ENCODE measurements at regions of chr1 and their contacts with region 1.

Region 1: DNA sequence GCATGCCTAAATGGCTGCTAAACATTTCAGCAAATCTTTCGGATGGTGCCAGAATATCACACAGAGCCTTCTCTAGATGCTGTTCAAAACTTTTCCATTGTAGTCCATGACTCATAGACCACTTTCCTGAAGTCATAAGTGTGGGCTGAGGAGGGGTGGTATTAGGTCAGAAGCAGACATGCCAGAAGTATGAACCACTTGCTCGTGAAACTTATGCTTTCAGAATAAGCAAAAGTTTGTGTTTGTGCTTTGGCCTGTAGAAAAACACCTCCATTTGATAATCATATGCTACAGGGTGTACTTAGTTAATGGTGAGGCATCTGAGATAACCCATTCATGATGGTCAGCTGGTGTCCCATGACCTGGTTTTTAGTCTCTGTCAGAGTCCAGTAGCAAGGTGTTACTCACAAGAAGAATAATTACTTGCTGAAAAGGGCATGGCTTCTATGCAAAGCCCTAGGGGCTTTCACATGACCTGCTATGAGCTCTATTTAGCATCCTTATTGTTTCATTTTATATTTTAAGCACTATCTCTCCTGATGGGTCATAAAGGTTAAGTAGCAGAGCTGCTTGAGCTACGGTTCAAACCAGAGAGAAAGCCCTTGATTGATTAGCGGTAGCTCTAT is 183.1 kb upstream of the IVNS1ABP start:
- DNase-seq: peak; percentile 67
- H3K4me3 ChIP-seq: no peak overlapping the region
- H3K27ac ChIP-seq: no peak overlapping the region
- H3K4me1 ChIP-seq: peaks cover 8% of the 10 kb centered on the region
- H3K27me3 ChIP-seq: no peaks in the 10 kb centered on the region
- CTCF ChIP-seq: no peak
- POLR2A ChIP-seq: no peak

Region 2: DNA sequence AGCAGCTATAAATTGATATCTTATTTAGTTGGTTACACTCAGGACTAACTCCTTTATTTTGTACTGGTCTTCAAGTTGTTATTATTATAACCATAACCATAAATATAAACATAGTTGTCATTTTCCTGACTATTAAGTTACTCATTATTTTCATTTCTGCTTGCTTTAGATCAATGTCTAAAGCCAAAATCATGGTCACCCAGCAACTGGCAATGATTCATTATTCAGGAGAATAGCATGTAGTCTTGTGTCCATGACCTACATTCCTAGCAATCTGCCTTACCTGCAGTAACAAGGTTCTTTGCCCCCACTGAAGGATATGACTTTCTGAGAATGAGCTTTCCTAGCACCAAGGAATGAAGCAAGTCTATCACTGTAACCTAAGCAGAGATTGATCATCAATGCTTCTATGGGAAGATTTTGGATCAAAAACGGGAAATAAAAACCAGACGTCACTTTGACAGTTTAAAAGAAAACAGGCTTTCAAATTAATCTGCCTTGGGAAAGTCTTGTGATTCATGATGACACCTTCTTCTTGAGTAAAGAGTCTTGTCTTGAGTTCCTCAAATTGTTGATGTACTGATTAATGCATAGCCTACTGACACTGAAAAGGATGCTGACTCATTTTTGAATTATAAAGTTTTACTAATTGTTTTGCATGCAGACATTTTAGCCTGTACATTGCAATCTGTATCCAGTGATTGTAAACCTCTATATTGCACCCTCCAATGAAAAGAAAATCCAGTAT is 20.2 kb after region 1 on chr1:
- CTCF ChIA-PET with region 1: no interaction called
- POLR2A ChIA-PET with region 1: no interaction called
- dilution Hi-C with region 1: no loop called
- intact Hi-C with region 1: loop called (anchors 2 kb)
- DNase-seq: peak; percentile 57
- H3K4me3 ChIP-seq: no peak overlapping the region
- H3K27ac ChIP-seq: peak overlapping the region; percentile 35
- H3K4me1 ChIP-seq: peaks cover 8% of the 10 kb centered on the region
- H3K27me3 ChIP-seq: no peaks in the 10 kb centered on the region
- CTCF ChIP-seq: no peak
- POLR2A ChIP-seq: no peak

Region 3: DNA sequence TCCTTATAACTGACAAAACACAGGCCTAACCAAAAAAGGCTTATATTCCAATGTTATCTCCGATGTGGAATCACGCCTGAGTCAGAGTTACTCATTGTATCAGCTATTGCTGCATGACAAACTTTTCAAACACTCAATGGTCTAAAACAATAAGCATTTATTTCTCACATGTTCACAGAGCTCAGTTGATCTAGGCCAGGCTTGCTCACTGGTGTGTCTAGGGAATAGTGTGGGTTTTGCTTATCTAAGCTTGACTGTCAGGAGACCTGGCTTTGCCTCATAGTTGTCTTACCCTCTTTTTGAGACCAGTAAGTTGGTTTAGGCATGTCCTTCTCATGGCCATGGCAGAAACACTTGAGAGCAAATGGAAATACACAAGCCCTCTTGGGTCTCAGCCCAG is 364.8 kb after region 1 on chr1:
- CTCF ChIA-PET with region 1: no interaction called
- POLR2A ChIA-PET with region 1: no interaction called
- dilution Hi-C with region 1: no loop called
- intact Hi-C with region 1: no loop called
- DNase-seq: peak; percentile 74
- H3K4me3 ChIP-seq: no peak overlapping the region
- H3K27ac ChIP-seq: peak overlapping the region; percentile 63
- H3K4me1 ChIP-seq: peaks cover 36% of the 10 kb centered on the region
- H3K27me3 ChIP-seq: no peaks in the 10 kb centered on the region
- CTCF ChIP-seq: no peak
- POLR2A ChIP-seq: no peak

Region 4: DNA sequence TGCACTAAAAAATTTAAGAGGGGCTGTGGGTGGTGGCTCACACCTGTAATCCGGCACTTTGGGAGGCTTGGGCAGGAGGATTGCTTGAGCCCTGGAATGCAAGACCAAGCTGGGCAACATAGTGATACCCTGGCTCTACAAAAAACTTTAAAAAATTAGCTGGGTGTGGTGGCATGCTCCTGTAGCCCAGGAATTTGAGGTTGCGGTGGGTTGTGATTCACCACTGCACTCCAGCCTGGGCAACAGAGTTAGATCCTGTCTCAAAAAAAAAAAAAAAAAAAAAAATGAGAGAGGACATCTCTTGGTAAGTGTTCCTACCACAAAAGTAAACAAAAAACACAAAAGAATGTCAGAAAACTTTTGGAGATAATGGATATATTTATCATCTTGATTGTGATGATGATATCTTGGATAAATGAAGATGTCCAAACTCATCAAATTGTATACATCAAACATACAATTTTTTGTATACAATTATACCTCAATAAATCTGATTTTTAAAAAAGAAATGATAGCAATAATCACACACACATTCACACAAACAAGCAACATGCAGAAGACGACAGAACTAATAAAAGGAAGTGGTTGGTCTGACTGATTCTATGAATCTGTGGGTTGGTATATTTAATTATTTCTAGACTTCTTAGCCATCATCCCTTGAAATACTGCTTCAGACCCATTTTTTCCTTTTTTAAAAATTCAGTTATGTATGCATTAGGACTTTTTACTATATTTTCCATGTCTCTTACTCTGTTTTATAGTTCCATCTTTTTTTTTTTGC is 1794.5 kb after region 1 on chr1:
- CTCF ChIA-PET with region 1: no interaction called
- POLR2A ChIA-PET with region 1: no interaction called
- dilution Hi-C with region 1: no loop called
- intact Hi-C with region 1: no loop called
- DNase-seq: no peak
- H3K4me3 ChIP-seq: no peak overlapping the region
- H3K27ac ChIP-seq: no peak overlapping the region
- H3K4me1 ChIP-seq: no peaks in the 10 kb centered on the region
- H3K27me3 ChIP-seq: no peaks in the 10 kb centered on the region
- CTCF ChIP-seq: no peak
- POLR2A ChIP-seq: no peak

Measured in endothelial cell of umbilical vein (primary cell).